ENCODE measurements at regions of chr1 and their contacts with region 1.

Region 1: GRCh38 chr1:84690397-84691121 is at the start of gene SSX2IP:
- DNase-seq: peak; percentile 97
- ATAC-seq: peak; percentile 86
- H3K4me3 ChIP-seq: peak within 1 kb of the TSS; percentile 71 to 93 (median 85)
- H3K4me3 Mint-ChIP-seq: peak within 1 kb of the TSS; percentile 80
- H3K27ac ChIP-seq: peak within 1 kb of the TSS; percentile 56 to 64
- H3K27ac Mint-ChIP-seq: peak within 1 kb of the TSS; percentile 62
- H3K4me1 ChIP-seq: peaks cover 12 to 24% of the 10 kb centered on the region in 2 donors
- H3K4me1 Mint-ChIP-seq: peaks cover 27% of the 10 kb centered on the region
- H3K27me3 ChIP-seq: no peaks in the 10 kb centered on the region
- H3K27me3 Mint-ChIP-seq: no peaks in the 10 kb centered on the region
- CTCF ChIP-seq: no peak
- total RNA-seq, gene SSX2IP: 7.1 and 10.3 TPM in 2 replicates

Region 2: GRCh38 chr1:84620720-84621313 is 69.7 kb before region 1 on chr1:
- CTCF ChIA-PET with region 1: no interaction called
- POLR2A ChIA-PET with region 1: no interaction called
- intact Hi-C with region 1: loop called (anchors 2 kb)
- DNase-seq: peak; percentile 90
- ATAC-seq: peak; percentile 92
- H3K4me3 ChIP-seq: peak overlapping the region in 4 of 5 experiments; percentile 59 to 84 (median 72)
- H3K4me3 Mint-ChIP-seq: peak overlapping the region; percentile 96
- H3K27ac ChIP-seq: no peak overlapping the region
- H3K27ac Mint-ChIP-seq: peak overlapping the region; percentile 69
- H3K4me1 ChIP-seq: peaks cover 0 to 4% of the 10 kb centered on the region in 2 donors
- H3K4me1 Mint-ChIP-seq: peaks cover 6% of the 10 kb centered on the region
- H3K27me3 ChIP-seq: peaks cover 0 to 5% (median 0%) of the 10 kb centered on the region in 4 experiments
- H3K27me3 Mint-ChIP-seq: peaks cover 6% of the 10 kb centered on the region
- CTCF ChIP-seq: peak; percentile 100

Region 3: GRCh38 chr1:84705513-84705912 is 15.0 kb after region 1 on chr1:
- CTCF ChIA-PET with region 1: no interaction called
- POLR2A ChIA-PET with region 1: no interaction called
- intact Hi-C with region 1: no loop called
- DNase-seq: no peak
- ATAC-seq: no peak
- H3K4me3 ChIP-seq: no peak overlapping the region
- H3K4me3 Mint-ChIP-seq: no peak overlapping the region
- H3K27ac ChIP-seq: no peak overlapping the region
- H3K27ac Mint-ChIP-seq: no peak overlapping the region
- H3K4me1 ChIP-seq: peaks cover 11 to 12% of the 10 kb centered on the region in 2 donors
- H3K4me1 Mint-ChIP-seq: no peaks in the 10 kb centered on the region
- H3K27me3 ChIP-seq: no peaks in the 10 kb centered on the region
- H3K27me3 Mint-ChIP-seq: peaks cover 6% of the 10 kb centered on the region
- CTCF ChIP-seq: no peak

Region 4: DNA sequence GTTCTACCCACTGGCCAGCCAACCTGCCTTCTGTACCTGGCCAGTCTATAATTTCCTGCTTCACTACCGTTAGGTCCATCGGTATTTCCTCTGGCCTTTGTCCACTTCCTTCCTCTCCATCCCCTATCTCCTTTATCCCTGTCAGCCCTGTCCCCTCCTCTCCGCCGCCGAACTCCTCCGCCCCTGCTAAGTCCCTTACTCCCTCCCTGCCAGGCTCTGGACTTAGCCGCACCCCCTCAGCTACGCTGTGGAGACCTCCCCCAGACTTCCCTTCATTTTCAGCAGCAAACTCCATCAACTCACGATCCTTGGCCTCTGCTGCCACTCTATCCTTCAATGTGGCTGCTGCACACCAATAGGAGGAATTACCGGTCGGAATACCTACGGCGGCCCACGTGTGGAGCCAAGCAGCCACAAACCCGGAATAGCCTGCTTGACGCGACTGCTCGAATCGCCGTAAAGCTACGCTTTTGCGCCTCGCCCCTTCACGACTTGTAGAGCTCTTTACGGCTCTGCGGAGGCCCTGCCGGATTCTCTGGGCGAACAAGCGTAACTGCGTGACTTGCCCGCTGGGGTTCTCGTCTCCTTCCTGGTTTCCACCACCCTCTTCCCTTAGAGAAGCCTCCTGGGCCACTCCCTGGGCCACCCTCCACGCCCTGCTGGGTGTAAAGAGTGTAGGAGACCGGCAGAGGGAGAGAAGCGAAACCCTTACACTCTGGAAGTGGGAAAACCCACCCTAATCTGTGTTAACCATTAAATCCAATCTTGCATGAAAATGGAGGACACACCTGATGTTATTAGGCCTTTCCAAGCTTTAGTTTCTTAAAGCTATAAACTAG is 1017.6 kb after region 1 on chr1 and contains the start of gene ZNHIT6:
- CTCF ChIA-PET with region 1: no interaction called
- POLR2A ChIA-PET with region 1: no interaction called
- intact Hi-C with region 1: loop called (anchors 5 kb)
- DNase-seq: peak; percentile 92
- ATAC-seq: peak; percentile 95
- H3K4me3 ChIP-seq: peak within 1 kb of the TSS; percentile 76 to 99 (median 91)
- H3K4me3 Mint-ChIP-seq: no peak within 1 kb of the TSS
- H3K27ac ChIP-seq: peak within 1 kb of the TSS; percentile 73
- H3K27ac Mint-ChIP-seq: no peak within 1 kb of the TSS
- H3K4me1 ChIP-seq: peaks cover 16 to 22% of the 10 kb centered on the region in 2 donors
- H3K4me1 Mint-ChIP-seq: peaks cover 16% of the 10 kb centered on the region
- H3K27me3 ChIP-seq: peaks cover 0 to under 1% (median 0%) of the 10 kb centered on the region in 4 experiments
- H3K27me3 Mint-ChIP-seq: no peaks in the 10 kb centered on the region
- CTCF ChIP-seq: peak; percentile 27
- total RNA-seq, gene ZNHIT6: 16.3 and 17.3 TPM in 2 replicates

Measured in B cell (primary cell).